Sigmoid colon (tissue), 7 donors: ENCODE measurements at regions of chr3 and their contacts with region 1.

Region 1: DNA sequence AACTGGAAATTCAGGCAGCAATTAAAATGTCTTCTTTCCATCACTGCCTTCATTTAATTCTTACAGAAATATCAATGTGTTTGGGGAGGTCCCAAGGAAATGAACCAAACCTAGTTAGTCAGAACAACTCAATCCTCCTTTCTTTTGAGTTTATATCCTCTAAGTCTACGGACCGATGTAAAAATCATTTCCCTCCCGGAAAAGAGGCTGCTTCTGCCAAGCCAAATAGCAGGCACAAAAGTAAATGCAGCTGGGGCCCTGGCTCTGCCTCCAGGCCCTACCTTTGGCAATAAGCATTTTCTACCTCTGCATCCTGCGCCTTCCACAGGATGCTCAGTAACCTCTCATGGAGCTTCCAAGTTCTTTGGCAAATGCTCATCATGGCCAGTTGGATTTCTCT is 122.5 kb upstream of the COL8A1 start:
- DNase-seq: no peak
- H3K4me3 ChIP-seq: no peak overlapping the region
- H3K27ac ChIP-seq: no peak overlapping the region
- H3K4me1 ChIP-seq: no peaks in the 10 kb centered on the region
- H3K27me3 ChIP-seq: no peaks in the 10 kb centered on the region
- CTCF ChIP-seq: no peak
- EP300 ChIP-seq: no peak
- POLR2A ChIP-seq: no peak

Region 2: GRCh38 chr3:98577178-98577895 is 938.6 kb before region 1 on chr3:
- intact Hi-C with region 1: no loop called
- DNase-seq: no peak
- H3K4me3 ChIP-seq: no peak overlapping the region
- H3K27ac ChIP-seq: no peak overlapping the region
- H3K4me1 ChIP-seq: no peaks in the 10 kb centered on the region
- H3K27me3 ChIP-seq: no peaks in the 10 kb centered on the region
- CTCF ChIP-seq: no peak
- EP300 ChIP-seq: no peak
- POLR2A ChIP-seq: no peak

Region 3: DNA sequence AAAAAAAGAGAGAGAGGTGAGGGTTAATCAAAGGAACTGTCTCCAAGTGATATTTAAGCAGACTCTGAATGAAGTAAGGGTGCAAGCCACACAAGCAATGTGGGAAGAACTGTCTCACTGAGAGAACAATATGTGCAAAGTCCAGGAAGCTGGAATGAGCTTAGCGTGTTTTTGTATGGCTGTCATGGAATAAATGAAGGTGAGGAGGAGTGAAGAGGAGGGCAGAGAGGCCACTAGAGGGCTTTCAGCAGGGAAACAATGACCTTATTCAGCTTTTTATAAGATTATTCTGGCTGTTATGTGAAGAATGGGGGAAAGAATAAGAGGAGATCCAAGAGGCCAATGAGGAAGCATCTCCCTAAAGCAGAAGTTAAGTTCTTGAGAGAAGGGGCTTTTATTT is 35.6 kb after region 1 on chr3:
- intact Hi-C with region 1: no loop called
- DNase-seq: no peak
- H3K4me3 ChIP-seq: no peak overlapping the region
- H3K27ac ChIP-seq: no peak overlapping the region
- H3K4me1 ChIP-seq: peaks cover 0 to 20% (median 3%) of the 10 kb centered on the region in 4 donors
- H3K27me3 ChIP-seq: no peaks in the 10 kb centered on the region
- CTCF ChIP-seq: no peak
- EP300 ChIP-seq: no peak
- POLR2A ChIP-seq: no peak

Region 4: DNA sequence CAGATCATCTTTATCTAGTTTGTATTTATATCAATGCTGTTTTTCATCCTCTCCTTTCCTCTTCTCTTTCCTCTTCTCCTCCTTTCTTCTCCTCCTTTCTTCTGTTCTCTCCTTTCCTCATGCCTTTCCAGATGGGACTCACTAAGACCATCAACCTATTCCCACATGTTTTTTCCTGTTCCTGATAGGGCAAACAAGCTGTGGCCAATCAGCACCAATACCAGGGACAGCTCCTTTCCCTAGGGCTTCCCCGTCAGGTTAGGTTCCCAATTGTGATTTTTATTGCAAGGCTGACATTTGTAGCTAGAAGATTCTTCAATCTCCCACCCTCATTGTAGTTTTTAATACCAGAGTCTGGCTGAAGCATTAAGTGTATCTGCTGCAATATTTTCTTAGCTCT is 46.2 kb after region 1 on chr3:
- intact Hi-C with region 1: loop called (anchors 10 kb)
- DNase-seq: no peak
- H3K4me3 ChIP-seq: no peak overlapping the region
- H3K27ac ChIP-seq: no peak overlapping the region
- H3K4me1 ChIP-seq: no peaks in the 10 kb centered on the region
- H3K27me3 ChIP-seq: no peaks in the 10 kb centered on the region
- CTCF ChIP-seq: no peak
- EP300 ChIP-seq: no peak
- POLR2A ChIP-seq: no peak

Region 5: GRCh38 chr3:99753268-99753975 is 237.5 kb after region 1 on chr3:
- intact Hi-C with region 1: no loop called
- DNase-seq: no peak
- H3K4me3 ChIP-seq: no peak overlapping the region
- H3K27ac ChIP-seq: no peak overlapping the region
- H3K4me1 ChIP-seq: peaks cover 0 to 24% (median 10%) of the 10 kb centered on the region in 4 donors
- H3K27me3 ChIP-seq: no peaks in the 10 kb centered on the region
- CTCF ChIP-seq: peak; percentile 36 to 71 (median 55)
- EP300 ChIP-seq: no peak
- POLR2A ChIP-seq: no peak